A673 (cell line): ENCODE measurements at regions of chr1 and their contacts with region 1.

Region 1: GRCh38 chr1:113677250-113678158 is 81.8 kb downstream of the PHTF1 start:
- DNase-seq: peak; percentile 77
- H3K4me3 ChIP-seq: no peak overlapping the region
- H3K27ac ChIP-seq: no peak overlapping the region
- H3K4me1 ChIP-seq: peaks cover 4% of the 10 kb centered on the region
- H3K27me3 ChIP-seq: no peaks in the 10 kb centered on the region
- CTCF ChIP-seq: peak; percentile 71

Region 2: DNA sequence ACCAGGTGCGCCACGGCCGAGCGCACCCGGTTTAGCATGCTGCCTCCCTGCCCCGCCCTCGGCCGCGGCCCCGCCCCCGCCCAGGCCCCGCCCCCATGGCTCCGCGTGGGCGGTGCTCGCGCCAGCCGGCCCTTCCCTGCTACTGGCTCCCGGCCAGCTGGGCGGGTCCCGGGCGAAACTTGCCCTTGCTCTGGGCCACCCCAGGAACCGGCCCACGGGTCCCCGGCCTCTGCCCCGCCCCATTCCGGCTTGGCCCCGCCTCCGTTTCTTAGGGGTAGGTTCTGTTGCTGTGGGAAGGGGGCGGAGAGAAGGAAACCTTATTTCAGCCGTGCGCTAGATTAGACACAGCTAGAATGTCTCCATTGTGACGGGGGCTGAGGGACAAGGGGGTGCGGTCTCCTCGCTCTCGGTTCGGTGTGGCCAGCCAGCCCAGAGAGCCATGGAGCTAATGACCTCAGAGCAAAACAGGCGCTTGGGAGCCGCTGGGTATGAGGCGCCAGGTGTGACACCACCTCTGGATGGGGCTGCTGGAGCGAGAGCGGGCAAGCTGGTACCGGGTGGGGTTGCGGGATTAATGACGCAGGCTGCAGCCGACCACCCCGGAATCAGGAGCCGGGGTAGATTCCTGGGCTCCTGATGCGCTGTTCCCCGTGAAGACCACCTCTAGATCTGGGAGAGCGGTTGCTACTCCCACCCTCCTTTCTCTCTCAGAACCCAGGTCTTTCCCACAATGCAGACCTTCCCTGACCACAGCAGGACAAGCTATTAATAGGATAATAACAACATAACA is 962.0 kb before region 1 on chr1 and contains the start of gene PPM1J:
- CTCF ChIA-PET with region 1: no interaction called
- POLR2A ChIA-PET with region 1: no interaction called
- intact Hi-C with region 1: loop called (anchors 5 kb)
- DNase-seq: peak; percentile 91
- H3K4me3 ChIP-seq: peak within 1 kb of the TSS; percentile 52
- H3K27ac ChIP-seq: no peak within 1 kb of the TSS
- H3K4me1 ChIP-seq: peaks cover 19% of the 10 kb centered on the region
- H3K27me3 ChIP-seq: peaks cover 48% of the 10 kb centered on the region
- CTCF ChIP-seq: no peak
- total RNA-seq, gene PPM1J: 0.28 and 0.52 TPM in 2 replicates

Region 3: DNA sequence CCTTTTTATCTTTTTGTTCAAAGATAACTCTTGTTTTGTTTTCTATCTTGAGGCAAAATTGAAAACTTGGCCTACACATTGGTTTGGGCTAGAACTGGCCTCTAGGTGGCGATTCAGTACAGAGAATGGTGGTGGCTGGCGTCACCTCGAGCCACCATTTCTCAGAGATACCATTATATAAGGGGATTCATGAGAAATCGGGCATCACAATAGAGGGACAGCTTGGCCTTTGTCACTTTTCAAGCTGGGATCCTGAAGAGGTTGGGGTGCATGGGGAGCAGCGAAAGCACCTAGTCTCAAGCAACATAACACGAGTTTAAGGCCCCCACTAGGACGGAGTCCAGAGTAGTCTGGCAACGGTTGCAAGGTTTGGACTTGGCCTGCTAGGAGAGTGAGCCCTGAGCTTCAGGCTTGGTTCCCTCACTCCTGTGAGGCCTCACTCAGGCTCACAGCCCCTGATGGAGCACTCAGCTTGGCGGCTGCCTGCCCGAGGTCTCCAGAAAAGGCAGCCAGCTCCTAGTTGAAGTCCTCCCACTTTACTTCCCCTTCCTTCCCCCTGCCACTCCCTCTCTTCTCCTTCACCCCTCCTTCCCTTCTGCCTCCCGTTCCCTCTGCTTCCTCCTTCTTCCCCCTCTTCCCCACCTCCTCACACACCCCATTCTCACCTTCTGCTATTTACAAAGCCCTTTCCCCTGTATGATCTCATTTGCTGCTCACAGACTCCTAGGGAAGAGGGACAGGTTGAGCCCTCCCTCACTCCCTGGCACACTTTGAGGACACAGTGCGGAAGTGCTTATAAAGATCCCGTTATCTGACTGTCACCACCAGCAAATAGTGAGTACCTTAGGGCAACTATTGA is 536.7 kb before region 1 on chr1:
- CTCF ChIA-PET with region 1: no interaction called
- POLR2A ChIA-PET with region 1: no interaction called
- intact Hi-C with region 1: loop called (anchors 1 kb)
- DNase-seq: peak; percentile 79
- H3K4me3 ChIP-seq: no peak overlapping the region
- H3K27ac ChIP-seq: peak overlapping the region; percentile 19
- H3K4me1 ChIP-seq: peaks cover 26% of the 10 kb centered on the region
- H3K27me3 ChIP-seq: no peaks in the 10 kb centered on the region
- CTCF ChIP-seq: peak; percentile 94

Region 4: DNA sequence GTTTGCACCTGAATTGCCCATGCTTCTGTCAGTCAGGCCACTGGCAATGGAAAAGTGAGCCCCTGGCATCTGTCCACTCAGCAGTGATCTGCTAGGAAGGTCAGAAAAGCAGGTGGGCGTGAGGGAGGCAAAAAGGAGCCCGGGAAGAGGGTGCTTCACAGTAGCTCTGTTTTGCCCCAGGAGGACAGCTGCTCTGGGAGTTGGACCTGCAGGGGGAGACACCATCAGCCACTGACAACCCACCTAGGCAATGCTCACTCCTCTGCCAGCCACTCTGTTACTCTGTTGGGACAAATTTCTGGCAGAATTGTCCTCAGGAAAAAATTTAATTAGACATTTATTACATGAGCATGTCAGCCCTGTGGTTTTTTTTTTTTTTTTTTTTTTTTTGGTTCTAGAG is 458.1 kb before region 1 on chr1:
- CTCF ChIA-PET with region 1: no interaction called
- POLR2A ChIA-PET with region 1: no interaction called
- intact Hi-C with region 1: loop called (anchors 10 kb)
- DNase-seq: peak; percentile 21
- H3K4me3 ChIP-seq: no peak overlapping the region
- H3K27ac ChIP-seq: no peak overlapping the region
- H3K4me1 ChIP-seq: no peaks in the 10 kb centered on the region
- H3K27me3 ChIP-seq: no peaks in the 10 kb centered on the region
- CTCF ChIP-seq: peak; percentile 42

Region 5: GRCh38 chr1:113488576-113489177 is 188.8 kb before region 1 on chr1:
- CTCF ChIA-PET with region 1: no interaction called
- POLR2A ChIA-PET with region 1: no interaction called
- intact Hi-C with region 1: loop called (anchors 1 kb)
- DNase-seq: peak; percentile 64
- H3K4me3 ChIP-seq: no peak overlapping the region
- H3K27ac ChIP-seq: no peak overlapping the region
- H3K4me1 ChIP-seq: no peaks in the 10 kb centered on the region
- H3K27me3 ChIP-seq: no peaks in the 10 kb centered on the region
- CTCF ChIP-seq: peak; percentile 65

Region 6: DNA sequence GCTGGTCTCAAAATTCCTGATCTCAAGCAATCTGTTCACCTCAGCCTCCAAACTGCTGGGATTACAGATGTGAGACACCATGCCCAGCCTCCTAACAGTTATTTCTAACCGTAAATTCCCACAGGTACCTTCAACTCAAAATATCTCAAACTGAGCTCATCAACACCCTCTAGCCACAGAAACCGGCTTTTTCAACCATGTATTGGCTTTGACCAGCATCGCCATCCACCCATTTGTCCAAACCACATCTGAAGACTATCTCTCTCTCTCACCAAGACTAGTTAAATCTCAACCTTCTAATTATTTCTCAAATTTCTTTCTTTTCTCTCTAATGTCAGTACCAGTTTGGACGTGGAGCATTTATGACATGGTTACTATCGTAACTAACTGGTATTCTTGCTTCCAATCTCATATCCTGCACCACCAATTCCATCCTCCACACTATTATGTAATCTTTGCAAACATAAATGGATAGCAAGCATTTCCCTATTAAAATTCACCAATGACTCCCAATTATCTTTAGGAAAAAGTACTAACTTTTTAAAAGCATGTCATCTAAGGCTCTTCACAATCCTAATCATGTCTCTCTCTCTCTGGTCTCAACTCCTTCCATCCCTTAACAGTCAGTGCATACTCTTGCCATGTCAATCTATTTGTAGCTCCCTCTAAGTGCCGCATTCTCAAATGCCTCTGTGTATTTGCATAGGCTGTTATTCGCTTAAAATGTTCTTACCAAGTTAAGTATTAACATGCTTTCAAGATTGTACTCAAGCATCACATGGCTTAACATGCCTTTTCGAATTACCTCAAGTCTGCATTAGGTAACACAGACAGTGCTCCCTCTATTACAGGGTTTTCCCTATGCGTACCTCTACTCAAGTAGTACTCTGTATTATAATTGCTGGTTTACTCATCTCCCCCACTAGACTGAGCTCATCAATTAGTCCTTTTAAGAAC is 116.7 kb after region 1 on chr1:
- CTCF ChIA-PET with region 1: no interaction called
- POLR2A ChIA-PET with region 1: no interaction called
- intact Hi-C with region 1: no loop called
- DNase-seq: no peak
- H3K4me3 ChIP-seq: no peak overlapping the region
- H3K27ac ChIP-seq: no peak overlapping the region
- H3K4me1 ChIP-seq: no peaks in the 10 kb centered on the region
- H3K27me3 ChIP-seq: no peaks in the 10 kb centered on the region
- CTCF ChIP-seq: no peak